Common myeloid progenitor, CD34-positive (primary cell): ENCODE measurements at regions of chr20 and their contacts with region 1.

Region 1: GRCh38 chr20:36613974-36614373 is 8.4 kb downstream of the RAB5IF start:
- DNase-seq: no peak
- H3K4me3 ChIP-seq: no peak overlapping the region
- H3K27ac ChIP-seq: no peak overlapping the region
- H3K4me1 ChIP-seq: no peaks in the 10 kb centered on the region
- H3K27me3 ChIP-seq: no peaks in the 10 kb centered on the region

Region 2: DNA sequence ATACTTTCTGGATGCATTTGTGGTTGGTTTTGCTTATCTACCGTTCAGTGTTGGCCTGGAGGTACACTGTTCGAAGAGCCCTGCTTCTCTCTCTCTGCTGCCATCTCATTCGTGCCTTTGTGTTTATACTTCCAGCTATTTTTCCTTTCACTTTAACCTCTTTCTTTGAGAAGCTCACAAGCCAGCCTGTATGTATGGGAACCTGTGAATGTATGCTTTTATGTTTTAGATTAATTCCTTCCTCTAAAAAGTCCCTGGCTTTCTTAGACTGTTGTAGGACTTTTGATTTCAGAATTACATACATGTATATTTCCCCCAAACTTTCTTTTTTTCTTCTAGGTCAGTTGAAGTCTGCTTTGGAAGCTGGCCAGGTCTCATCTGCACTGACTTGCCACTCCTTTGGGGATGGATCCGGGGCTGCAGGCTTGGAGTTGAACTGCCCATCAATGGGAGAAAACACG is 742.6 kb before region 1 on chr20:
- CTCF ChIA-PET with region 1: no interaction called
- POLR2A ChIA-PET with region 1: no interaction called
- DNase-seq: no peak
- H3K4me3 ChIP-seq: no peak overlapping the region
- H3K27ac ChIP-seq: no peak overlapping the region
- H3K4me1 ChIP-seq: peaks cover 0 to 7% (median 3%) of the 10 kb centered on the region in 4 experiments
- H3K27me3 ChIP-seq: no peaks in the 10 kb centered on the region

Region 3: DNA sequence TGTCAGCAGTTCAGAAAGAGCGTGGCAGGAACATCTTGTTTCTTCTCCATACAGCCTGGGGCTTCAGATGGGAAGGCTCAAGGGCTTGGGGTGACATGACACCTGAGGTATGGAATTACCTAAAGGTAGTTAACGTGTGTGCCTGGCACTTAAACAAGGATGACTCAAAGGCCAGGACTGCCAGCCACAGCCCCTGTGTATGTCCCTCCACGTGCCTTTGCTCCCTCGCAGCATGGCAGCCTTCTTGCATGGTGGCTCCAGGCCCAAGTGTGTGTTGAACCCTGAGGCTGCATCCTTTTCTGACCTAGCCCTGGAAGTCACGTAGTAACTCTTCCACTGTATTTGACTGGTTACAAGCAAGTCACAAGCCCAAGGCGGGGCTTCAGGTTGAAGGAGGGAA is 106.2 kb before region 1 on chr20:
- CTCF ChIA-PET with region 1: no interaction called
- POLR2A ChIA-PET with region 1: no interaction called
- DNase-seq: no peak
- H3K4me3 ChIP-seq: no peak overlapping the region
- H3K27ac ChIP-seq: no peak overlapping the region
- H3K4me1 ChIP-seq: no peaks in the 10 kb centered on the region
- H3K27me3 ChIP-seq: no peaks in the 10 kb centered on the region

Region 4: DNA sequence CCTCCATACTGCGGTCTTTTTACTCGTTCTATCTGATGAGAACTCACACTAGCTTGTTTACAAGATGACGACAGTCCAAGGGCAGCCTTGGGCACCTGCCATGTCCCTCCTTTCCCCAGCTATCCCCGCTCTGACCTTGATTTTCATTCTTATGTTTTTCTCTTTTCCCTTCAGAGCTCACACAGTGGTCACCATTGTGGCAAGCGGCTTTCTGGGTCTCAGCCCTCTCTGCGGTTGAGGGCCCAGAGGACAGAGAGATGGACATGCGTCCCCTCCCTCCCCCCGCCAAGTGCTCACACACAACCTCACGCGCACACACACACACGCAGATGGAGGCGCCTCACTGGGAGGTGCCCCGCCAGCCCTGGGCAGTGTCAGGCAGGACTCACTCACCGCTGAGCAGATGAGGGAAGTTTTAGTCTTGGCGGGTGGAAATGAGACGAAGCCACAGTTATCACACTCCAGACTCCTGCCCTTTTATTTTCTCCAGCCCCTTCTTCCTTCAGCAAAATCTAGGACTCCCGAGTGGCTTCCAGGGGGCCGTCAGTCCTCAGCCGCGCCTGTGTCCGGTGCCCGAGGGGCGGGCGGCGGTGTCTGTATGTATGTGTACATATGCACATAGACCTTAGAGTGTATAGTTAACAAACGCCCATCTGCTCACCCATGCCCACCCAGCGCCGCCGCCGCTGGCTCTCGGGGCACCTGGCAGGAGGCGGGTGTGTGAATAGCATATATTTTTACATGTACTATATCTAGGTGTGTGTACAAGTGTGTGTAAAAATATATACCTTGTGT is 86.4 kb before region 1 on chr20:
- CTCF ChIA-PET with region 1: no interaction called
- POLR2A ChIA-PET with region 1: no interaction called
- DNase-seq: no peak
- H3K4me3 ChIP-seq: no peak overlapping the region
- H3K27ac ChIP-seq: no peak overlapping the region
- H3K4me1 ChIP-seq: peaks cover 6 to 18% (median 15%) of the 10 kb centered on the region in 4 experiments
- H3K27me3 ChIP-seq: no peaks in the 10 kb centered on the region

Region 5: DNA sequence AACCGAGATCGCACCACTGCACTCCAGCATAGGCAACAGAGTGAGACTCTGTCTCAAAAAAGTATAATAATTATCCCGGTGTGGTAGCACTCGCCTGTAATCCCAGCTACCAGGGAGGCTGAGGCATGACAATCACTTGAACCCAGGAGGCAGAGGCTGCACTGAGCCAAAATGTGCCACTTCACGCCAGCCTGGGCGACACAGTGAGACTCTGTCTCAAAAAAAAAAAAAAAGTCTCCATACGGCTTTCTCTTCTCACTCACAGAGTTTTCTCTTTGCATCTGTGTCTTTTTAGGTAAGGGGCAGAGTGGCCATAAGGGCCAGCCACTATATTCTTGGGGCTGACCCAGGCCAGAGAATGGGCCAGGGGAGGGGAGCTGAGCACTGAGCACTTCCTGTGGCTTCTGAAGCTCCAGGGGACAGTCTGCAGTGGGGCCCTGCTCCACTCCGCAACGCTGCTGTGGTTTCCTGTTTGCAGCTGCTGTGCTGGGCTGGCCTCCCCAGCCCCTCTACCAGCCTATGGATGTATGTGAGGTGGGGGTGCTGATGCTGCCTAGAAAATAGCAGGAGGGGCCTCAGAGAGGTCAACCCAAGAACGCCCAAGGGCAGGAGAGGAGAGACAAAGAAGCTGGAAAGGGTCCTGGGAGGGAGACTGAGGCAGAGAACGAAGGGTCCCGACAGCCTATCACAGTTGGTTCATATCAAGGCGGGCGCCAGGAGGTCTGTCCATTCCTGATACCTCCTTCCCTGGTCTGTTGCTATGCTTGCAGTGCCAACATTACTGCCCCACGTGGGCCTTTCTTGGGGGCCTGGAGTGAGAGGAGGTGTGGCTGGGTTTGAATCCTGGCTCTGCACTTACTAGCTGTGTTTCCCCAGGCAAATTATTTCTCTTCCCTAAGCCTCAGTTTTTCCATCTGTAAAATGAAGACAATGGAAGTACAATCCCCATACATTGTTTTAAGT is 16.0 kb after region 1 on chr20:
- CTCF ChIA-PET with region 1: interaction called, 55 read pairs
- POLR2A ChIA-PET with region 1: no interaction called
- DNase-seq: peak in 2 of 3 donors; percentile 71 to 84
- H3K4me3 ChIP-seq: peak overlapping the region in 4 of 7 experiments; percentile 2 to 48 (median 38)
- H3K27ac ChIP-seq: peak overlapping the region; percentile 20 to 59
- H3K4me1 ChIP-seq: peaks cover 3 to 32% (median 16%) of the 10 kb centered on the region in 4 experiments
- H3K27me3 ChIP-seq: no peaks in the 10 kb centered on the region

Region 6: DNA sequence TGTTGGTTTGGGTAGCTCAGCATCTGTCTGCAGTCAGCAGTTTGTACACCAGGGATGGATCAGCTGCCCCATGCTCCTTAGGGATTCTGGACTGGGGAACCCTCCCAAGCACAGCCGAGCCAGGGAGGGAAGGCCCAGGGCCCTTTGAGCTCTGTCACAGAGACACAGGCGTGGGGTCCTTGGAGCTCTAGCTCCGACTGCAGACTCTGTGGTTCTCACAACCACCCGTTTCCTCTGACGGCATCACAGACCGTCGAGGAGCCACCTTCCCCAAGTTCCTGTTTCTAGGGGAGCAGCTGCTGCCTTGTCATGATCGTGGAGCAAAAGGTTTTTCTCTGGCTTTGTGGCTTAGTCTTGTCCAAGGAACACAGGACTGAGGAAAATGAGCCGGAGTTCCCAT is 32.0 kb after region 1 on chr20 and contains the start of gene SLA2:
- CTCF ChIA-PET with region 1: interaction called, 50 read pairs
- POLR2A ChIA-PET with region 1: interaction called, 4 read pairs
- DNase-seq: peak; percentile 91 to 98 (median 97)
- H3K4me3 ChIP-seq: peak within 1 kb of the TSS in 6 of 7 experiments; percentile 13 to 74 (median 60)
- H3K27ac ChIP-seq: peak within 1 kb of the TSS; percentile 78 to 82
- H3K4me1 ChIP-seq: peaks cover 10 to 55% (median 41%) of the 10 kb centered on the region in 4 experiments
- H3K27me3 ChIP-seq: no peaks in the 10 kb centered on the region

Region 7: DNA sequence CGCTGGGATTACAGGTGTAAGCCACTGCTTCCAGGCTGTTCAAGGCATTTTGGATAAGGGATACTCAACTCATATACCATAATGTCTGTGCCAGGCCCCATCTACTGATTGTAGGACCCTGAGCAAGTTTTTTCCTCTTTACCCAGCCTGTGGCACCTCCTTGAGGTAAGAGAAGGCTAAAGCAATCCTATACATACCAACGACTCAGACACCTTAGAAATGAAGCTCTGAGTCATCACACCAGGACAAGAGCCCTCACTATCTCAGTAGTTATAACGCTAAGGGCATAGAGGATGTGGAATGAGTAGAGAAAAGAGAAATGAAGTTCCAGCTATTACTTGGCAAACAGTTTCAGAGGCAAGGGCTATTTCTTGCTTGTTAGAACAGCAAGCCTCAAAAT is 115.0 kb after region 1 on chr20:
- CTCF ChIA-PET with region 1: interaction called, 14 read pairs
- POLR2A ChIA-PET with region 1: no interaction called
- DNase-seq: peak; percentile 36 to 64 (median 62)
- H3K4me3 ChIP-seq: no peak overlapping the region
- H3K27ac ChIP-seq: no peak overlapping the region
- H3K4me1 ChIP-seq: peaks cover 0 to 9% (median 5%) of the 10 kb centered on the region in 4 experiments
- H3K27me3 ChIP-seq: no peaks in the 10 kb centered on the region

Region 8: GRCh38 chr20:36754656-36755222 is 140.8 kb after region 1 on chr20:
- CTCF ChIA-PET with region 1: interaction called, 12 read pairs
- POLR2A ChIA-PET with region 1: no interaction called
- DNase-seq: peak; percentile 60 to 76 (median 68)
- H3K4me3 ChIP-seq: no peak overlapping the region
- H3K27ac ChIP-seq: no peak overlapping the region
- H3K4me1 ChIP-seq: peaks cover 5 to 24% (median 12%) of the 10 kb centered on the region in 4 experiments
- H3K27me3 ChIP-seq: no peaks in the 10 kb centered on the region

Region 9: GRCh38 chr20:36819659-36820058 is 205.7 kb after region 1 on chr20:
- CTCF ChIA-PET with region 1: no interaction called
- POLR2A ChIA-PET with region 1: no interaction called
- DNase-seq: no peak
- H3K4me3 ChIP-seq: no peak overlapping the region
- H3K27ac ChIP-seq: no peak overlapping the region
- H3K4me1 ChIP-seq: no peaks in the 10 kb centered on the region
- H3K27me3 ChIP-seq: no peaks in the 10 kb centered on the region